ENCODE measurements at regions of chr12 and their contacts with region 1.

Region 1: GRCh38 chr12:48988030-48988649 is 10.0 kb downstream of the WNT1 start:
- DNase-seq: no peak
- ATAC-seq: peak; percentile 92
- H3K4me3 ChIP-seq: no peak overlapping the region
- H3K27ac ChIP-seq: no peak overlapping the region
- H3K4me1 ChIP-seq: peaks cover 0 to 14% of the 10 kb centered on the region in 2 experiments; a peak in 3 of 4 replicates
- H3K27me3 ChIP-seq: 0 out of 2 replicates have a peak, but pooled peaks cover 5% of the 10 kb centered on the region
- CTCF ChIP-seq: peak; percentile 58 to 95 (median 95); a peak in 5 of 6 replicates
- POLR2A ChIP-seq: no peak
- RAD21 ChIP-seq: peak; percentile 48

Region 2: DNA sequence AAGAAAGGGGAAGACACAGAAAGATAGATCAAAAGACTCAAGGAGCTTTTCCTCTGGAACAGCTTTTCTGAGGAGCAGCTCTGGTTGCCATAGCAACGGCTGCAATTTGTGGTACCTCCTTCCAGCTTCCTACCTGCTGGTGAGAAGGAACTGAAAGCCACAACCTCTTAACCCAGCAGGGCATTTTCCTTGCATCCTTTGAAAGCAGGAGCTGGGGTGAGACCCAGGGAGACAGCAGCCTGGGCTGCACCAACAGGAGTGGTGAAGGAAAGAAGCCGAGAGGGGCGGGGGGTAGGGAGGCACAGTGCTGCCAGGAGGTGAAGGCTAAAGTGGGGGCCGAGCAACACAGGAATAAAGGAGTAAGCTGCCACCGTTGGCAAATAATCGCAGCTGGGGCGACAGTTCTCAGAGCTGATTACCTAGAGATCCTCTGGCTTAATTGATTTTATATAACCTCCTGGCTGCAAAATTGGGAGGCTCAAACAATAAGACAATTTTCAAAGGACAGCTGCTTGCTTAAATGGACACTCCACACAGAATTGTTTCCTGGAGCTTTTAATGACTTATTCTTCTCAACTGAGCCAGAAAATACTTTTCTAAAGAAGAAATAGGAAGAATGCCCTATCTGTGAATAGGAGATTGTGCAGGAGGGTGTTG is 1411.7 kb before region 1 on chr12:
- CTCF ChIA-PET with region 1: no interaction called
- POLR2A ChIA-PET with region 1: no interaction called
- RAD21 ChIA-PET with region 1: no interaction called
- intact Hi-C with region 1: no loop called
- DNase-seq: no peak
- ATAC-seq: no peak
- H3K4me3 ChIP-seq: no peak overlapping the region
- H3K27ac ChIP-seq: no peak overlapping the region
- H3K4me1 ChIP-seq: no peaks in the 10 kb centered on the region
- H3K27me3 ChIP-seq: no peaks in the 10 kb centered on the region
- CTCF ChIP-seq: no peak
- POLR2A ChIP-seq: no peak
- RAD21 ChIP-seq: no peak

Region 3: GRCh38 chr12:48744251-48745008 is 243.7 kb before region 1 on chr12:
- CTCF ChIA-PET with region 1: no interaction called
- POLR2A ChIA-PET with region 1: no interaction called
- RAD21 ChIA-PET with region 1: no interaction called
- intact Hi-C with region 1: no loop called
- DNase-seq: no peak
- ATAC-seq: no peak
- H3K4me3 ChIP-seq: no peak overlapping the region
- H3K27ac ChIP-seq: no peak overlapping the region
- H3K4me1 ChIP-seq: no peaks in the 10 kb centered on the region
- H3K27me3 ChIP-seq: no peaks in the 10 kb centered on the region
- CTCF ChIP-seq: no peak
- POLR2A ChIP-seq: no peak
- RAD21 ChIP-seq: no peak

Region 4: DNA sequence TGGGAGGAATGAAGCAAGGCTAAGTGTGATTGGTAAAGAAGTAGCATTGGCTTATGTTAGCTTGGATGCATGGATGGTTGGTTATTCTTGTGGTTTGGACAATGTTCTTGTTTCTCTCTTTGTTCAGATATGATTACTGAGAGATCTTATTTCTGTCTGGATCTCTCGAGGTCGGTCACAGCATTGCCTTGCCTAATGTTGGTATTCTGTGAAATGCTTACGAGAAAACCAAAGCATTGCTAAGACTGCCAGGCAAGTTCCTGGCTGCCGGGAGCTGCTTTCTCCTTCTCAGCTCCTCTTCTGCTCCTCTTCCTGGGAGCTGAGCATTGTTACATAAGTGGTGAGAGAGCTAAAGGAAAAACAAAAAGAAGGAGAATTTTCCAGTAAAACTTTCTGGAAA is 115.0 kb before region 1 on chr12:
- CTCF ChIA-PET with region 1: no interaction called
- POLR2A ChIA-PET with region 1: no interaction called
- RAD21 ChIA-PET with region 1: no interaction called
- intact Hi-C with region 1: no loop called
- DNase-seq: no peak
- ATAC-seq: no peak
- H3K4me3 ChIP-seq: no peak overlapping the region
- H3K27ac ChIP-seq: no peak overlapping the region
- H3K4me1 ChIP-seq: no peaks in the 10 kb centered on the region
- H3K27me3 ChIP-seq: no peaks in the 10 kb centered on the region
- CTCF ChIP-seq: no peak
- POLR2A ChIP-seq: no peak
- RAD21 ChIP-seq: no peak

Region 5: GRCh38 chr12:48957141-48958048 is 30.7 kb before region 1 on chr12 and contains the start of gene ARF3:
- CTCF ChIA-PET with region 1: interaction called, 18 read pairs
- POLR2A ChIA-PET with region 1: no interaction called
- RAD21 ChIA-PET with region 1: interaction called in 1 of 2 experiments, 7 read pairs
- intact Hi-C with region 1: no loop called
- DNase-seq: peak; percentile 73
- ATAC-seq: peak; percentile 88
- H3K4me3 ChIP-seq: peak within 1 kb of the TSS; percentile 94 to 95
- H3K27ac ChIP-seq: peak within 1 kb of the TSS; percentile 94
- H3K4me1 ChIP-seq: peaks cover 3 to 18% of the 10 kb centered on the region in 2 experiments
- H3K27me3 ChIP-seq: no peaks in the 10 kb centered on the region
- CTCF ChIP-seq: no peak
- POLR2A ChIP-seq: peak; percentile 67
- RAD21 ChIP-seq: no peak
- total RNA-seq, gene ARF3: 166 TPM

Region 6: DNA sequence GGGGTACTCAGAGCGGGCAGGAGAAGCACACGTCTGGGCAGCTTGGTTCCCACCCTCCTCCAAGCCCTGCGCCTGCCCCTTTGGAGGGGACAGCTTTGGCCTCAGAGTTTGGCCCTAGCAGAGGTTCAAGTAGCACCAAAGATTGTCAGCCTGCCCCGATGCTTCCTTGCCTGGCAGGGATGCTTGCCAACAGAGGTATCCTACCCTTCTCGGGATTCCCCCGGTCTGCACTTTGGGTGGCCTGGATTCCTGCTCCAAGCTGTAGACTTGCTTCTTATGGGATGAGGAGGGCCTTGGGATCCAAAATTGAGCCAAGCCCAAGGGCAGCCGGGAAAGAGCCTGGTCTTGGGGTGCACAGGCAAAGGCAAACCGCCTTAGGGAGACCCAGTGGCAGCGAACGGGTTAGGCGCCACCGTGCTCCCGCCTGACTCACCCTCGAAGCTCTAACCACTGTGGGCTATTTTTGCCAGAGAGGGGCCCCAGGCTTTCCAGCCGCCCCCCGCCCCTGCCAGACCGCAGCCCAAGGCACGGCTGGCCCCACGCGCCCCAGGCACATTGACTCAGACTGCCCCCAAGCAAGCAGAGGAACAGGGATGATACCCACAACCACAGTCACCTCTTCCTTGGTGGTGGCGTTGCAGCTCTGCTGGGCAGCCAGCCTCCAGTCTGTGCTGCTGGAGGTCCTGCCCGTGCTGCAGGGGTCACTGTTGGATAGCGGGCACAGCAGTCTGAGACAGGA is 15.8 kb before region 1 on chr12:
- CTCF ChIA-PET with region 1: interaction called, 16 read pairs
- POLR2A ChIA-PET with region 1: no interaction called
- RAD21 ChIA-PET with region 1: no interaction called
- intact Hi-C with region 1: no loop called
- DNase-seq: no peak
- ATAC-seq: no peak
- H3K4me3 ChIP-seq: peak overlapping the region in 1 of 2 experiments; percentile 82; a peak in 1 of 4 replicates
- H3K27ac ChIP-seq: no peak overlapping the region
- H3K4me1 ChIP-seq: peaks cover 6 to 24% of the 10 kb centered on the region in 2 experiments; a peak in 3 of 4 replicates
- H3K27me3 ChIP-seq: no peaks in the 10 kb centered on the region
- CTCF ChIP-seq: no peak
- POLR2A ChIP-seq: no peak
- RAD21 ChIP-seq: no peak

Region 7: GRCh38 chr12:48977315-48978281 is 10.5 kb before region 1 on chr12:
- CTCF ChIA-PET with region 1: interaction called, 16 read pairs
- POLR2A ChIA-PET with region 1: interaction called, 3 read pairs
- RAD21 ChIA-PET with region 1: no interaction called
- intact Hi-C with region 1: no loop called
- DNase-seq: no peak
- ATAC-seq: peak; percentile 88
- H3K4me3 ChIP-seq: no peak overlapping the region
- H3K27ac ChIP-seq: no peak overlapping the region
- H3K4me1 ChIP-seq: peaks cover 3 to 12% of the 10 kb centered on the region in 2 experiments; a peak in 3 of 4 replicates
- H3K27me3 ChIP-seq: peaks cover 3% of the 10 kb centered on the region; the same call in 1 of the 2 replicates
- CTCF ChIP-seq: peak; percentile 73 to 94 (median 87)
- POLR2A ChIP-seq: no peak
- RAD21 ChIP-seq: peak; percentile 43

Region 8: DNA sequence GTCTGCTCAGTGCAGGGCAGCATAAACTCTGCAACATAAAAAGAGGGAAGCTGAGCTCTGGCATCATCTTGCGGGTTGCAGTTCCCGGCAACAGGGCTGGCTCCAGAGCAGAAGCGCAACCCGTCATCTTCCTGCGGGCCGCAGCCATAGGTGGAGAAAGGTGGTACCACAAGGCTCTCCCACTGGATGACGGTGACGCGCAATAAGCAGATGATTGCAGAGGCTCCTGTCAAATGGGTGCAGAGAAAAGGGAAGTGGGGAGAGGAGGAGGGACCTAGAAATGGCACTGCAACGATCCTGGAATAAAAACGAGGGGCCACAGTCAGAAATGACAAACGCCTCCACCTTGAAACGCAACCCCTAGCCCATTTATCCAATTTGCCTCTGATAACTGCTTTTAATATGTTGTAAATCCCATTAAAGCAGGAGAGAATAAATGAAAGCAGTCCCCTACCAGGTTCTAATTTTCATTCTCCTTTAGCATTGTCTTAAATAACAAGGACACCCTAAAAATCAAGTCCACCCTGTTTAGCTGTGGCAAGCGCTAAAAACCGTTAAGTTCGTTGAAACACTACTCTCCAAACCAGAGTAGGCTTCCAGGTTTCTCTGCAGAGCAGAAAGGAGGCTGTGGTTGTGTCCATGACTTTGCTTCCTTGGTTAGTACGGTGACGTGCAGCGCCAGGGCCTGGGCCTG is 245.8 kb after region 1 on chr12:
- CTCF ChIA-PET with region 1: no interaction called
- POLR2A ChIA-PET with region 1: no interaction called
- RAD21 ChIA-PET with region 1: no interaction called
- intact Hi-C with region 1: no loop called
- DNase-seq: no peak
- ATAC-seq: no peak
- H3K4me3 ChIP-seq: peak overlapping the region in 1 of 2 experiments; percentile 59; a peak in 2 of 4 replicates
- H3K27ac ChIP-seq: peak overlapping the region; percentile 74
- H3K4me1 ChIP-seq: peaks cover 4 to 17% of the 10 kb centered on the region in 2 experiments; a peak in 3 of 4 replicates
- H3K27me3 ChIP-seq: no peaks in the 10 kb centered on the region
- CTCF ChIP-seq: no peak
- POLR2A ChIP-seq: no peak
- RAD21 ChIP-seq: no peak